ENCODE measurements at regions of chr3 and their contacts with region 1.

Region 1: DNA sequence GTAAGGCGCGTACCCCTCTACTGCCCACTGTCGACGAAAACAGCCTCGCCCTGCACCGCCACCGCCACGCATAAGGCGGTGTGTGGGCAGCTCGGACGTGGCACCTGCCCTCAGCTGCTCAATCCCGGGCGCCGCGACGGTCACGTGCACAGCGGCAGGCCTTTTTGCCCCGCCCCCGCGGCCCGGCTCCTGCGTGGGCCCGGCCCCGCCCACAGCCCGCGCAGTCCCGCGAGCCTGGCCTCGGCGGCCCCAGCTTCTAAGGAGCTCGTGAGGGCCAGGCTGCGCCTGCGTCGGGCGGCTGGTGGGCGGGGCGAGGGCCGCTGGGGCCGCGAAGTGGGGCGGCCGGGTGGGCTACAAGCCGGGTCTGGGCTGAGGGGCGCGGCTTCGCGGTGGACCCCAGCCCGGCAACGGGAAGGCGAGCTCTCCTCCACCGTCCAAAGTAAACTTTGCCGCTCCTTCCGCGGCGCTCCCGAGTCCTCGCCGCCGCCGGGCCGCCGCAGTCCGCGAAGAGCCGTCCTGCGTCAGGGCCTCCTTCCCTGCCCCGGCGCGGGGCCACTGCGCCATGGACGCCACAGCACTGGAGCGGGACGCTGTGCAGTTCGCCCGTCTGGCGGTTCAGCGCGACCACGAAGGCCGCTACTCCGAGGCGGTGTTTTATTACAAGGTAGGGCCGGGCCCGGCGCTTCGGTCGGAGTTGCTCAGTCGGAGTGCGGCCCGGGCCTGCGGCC is at the start of gene CAPN7:
- DNase-seq: peak; percentile 96
- H3K4me3 Mint-ChIP-seq: peak within 1 kb of the TSS; percentile 81
- H3K27ac Mint-ChIP-seq: peak within 1 kb of the TSS; percentile 82
- H3K4me1 Mint-ChIP-seq: peaks cover 29% of the 10 kb centered on the region
- H3K27me3 Mint-ChIP-seq: no peaks in the 10 kb centered on the region
- total RNA-seq, gene CAPN7: 23.6 to 28.1 TPM

Region 2: GRCh38 chr3:14947886-14948555 is 258.1 kb before region 1 on chr3:
- CTCF ChIA-PET with region 1: no interaction called
- POLR2A ChIA-PET with region 1: interaction called, 8 read pairs
- intact Hi-C with region 1: loop called (anchors 5 kb)
- DNase-seq: peak; percentile 97
- H3K4me3 Mint-ChIP-seq: peak overlapping the region; percentile 96
- H3K27ac Mint-ChIP-seq: peak overlapping the region; percentile 99
- H3K4me1 Mint-ChIP-seq: peaks cover 50% of the 10 kb centered on the region
- H3K27me3 Mint-ChIP-seq: no peaks in the 10 kb centered on the region

Region 3: GRCh38 chr3:15074493-15074892 is 131.6 kb before region 1 on chr3:
- CTCF ChIA-PET with region 1: no interaction called
- POLR2A ChIA-PET with region 1: no interaction called
- intact Hi-C with region 1: no loop called
- DNase-seq: no peak
- H3K4me3 Mint-ChIP-seq: no peak overlapping the region
- H3K27ac Mint-ChIP-seq: no peak overlapping the region
- H3K4me1 Mint-ChIP-seq: no peaks in the 10 kb centered on the region
- H3K27me3 Mint-ChIP-seq: no peaks in the 10 kb centered on the region

Region 4: DNA sequence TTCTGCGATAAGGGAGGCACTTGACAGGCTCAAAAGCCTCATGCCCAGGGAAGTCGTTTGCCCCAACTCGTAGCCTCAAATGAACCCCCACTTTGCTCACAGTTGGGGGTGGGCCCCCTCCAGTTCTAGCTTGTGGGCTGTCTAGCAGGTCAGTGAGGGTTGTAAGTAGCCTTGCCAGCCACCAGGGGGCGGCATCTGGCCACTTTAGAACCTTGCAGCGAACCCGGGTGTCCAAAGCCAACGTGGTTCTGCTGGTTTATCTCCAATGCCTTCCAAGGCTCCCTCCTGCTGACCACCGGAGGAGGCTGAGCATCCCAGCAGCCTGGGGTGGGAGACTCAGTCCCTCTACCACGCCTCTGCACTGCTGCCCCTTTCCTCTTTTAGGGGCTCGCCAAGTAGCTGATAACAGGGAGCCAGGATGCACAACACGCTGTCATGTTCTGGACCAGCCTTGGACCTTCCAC is 98.0 kb before region 1 on chr3:
- CTCF ChIA-PET with region 1: interaction called, 45 read pairs
- POLR2A ChIA-PET with region 1: no interaction called
- intact Hi-C with region 1: no loop called
- DNase-seq: peak; percentile 80
- H3K4me3 Mint-ChIP-seq: peak overlapping the region; percentile 5
- H3K27ac Mint-ChIP-seq: no peak overlapping the region
- H3K4me1 Mint-ChIP-seq: no peaks in the 10 kb centered on the region
- H3K27me3 Mint-ChIP-seq: peaks cover 6% of the 10 kb centered on the region

Region 5: DNA sequence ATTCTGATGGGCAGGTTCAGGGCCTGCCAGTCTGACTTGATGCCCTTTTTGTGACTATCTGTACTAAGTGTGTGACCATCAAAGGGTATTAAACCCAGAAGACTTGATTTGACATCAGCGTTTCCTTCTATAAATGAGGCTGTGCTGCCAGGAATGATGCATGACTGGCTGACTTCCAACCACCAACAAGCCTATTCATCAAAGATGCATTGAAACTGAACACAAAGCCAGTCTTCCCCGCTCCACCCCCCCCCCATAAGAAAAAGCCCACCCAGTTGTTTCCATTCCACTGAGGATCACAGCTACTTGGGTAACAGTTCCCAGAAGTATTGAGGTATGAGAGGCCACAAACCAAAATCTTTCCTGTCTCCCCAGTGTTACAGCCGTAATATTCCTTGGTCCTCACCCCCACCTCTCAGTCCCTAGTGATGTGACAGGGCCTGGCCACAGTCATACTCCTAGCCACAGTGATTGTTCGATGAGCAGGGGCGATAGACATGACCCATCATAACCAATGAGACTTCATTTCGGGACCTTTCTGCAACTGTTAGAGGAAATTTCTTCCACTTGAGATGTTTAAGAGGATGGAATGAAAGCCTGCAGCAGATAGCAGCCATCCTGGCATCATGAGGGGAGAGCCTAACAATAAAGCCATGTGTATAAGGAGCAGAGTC is 103.7 kb after region 1 on chr3:
- CTCF ChIA-PET with region 1: interaction called, 3 read pairs
- POLR2A ChIA-PET with region 1: interaction called, 3 read pairs
- intact Hi-C with region 1: loop called (anchors 2 kb)
- DNase-seq: peak; percentile 82
- H3K4me3 Mint-ChIP-seq: peak overlapping the region; percentile 61
- H3K27ac Mint-ChIP-seq: peak overlapping the region; percentile 98
- H3K4me1 Mint-ChIP-seq: peaks cover 78% of the 10 kb centered on the region
- H3K27me3 Mint-ChIP-seq: no peaks in the 10 kb centered on the region

Region 6: GRCh38 chr3:15405448-15406050 is 199.5 kb after region 1 on chr3:
- CTCF ChIA-PET with region 1: interaction called, 123 read pairs
- POLR2A ChIA-PET with region 1: interaction called, 4 read pairs
- intact Hi-C with region 1: loop called (anchors 1 kb)
- DNase-seq: no peak
- H3K4me3 Mint-ChIP-seq: no peak overlapping the region
- H3K27ac Mint-ChIP-seq: no peak overlapping the region
- H3K4me1 Mint-ChIP-seq: peaks cover 3% of the 10 kb centered on the region
- H3K27me3 Mint-ChIP-seq: no peaks in the 10 kb centered on the region

Region 7: DNA sequence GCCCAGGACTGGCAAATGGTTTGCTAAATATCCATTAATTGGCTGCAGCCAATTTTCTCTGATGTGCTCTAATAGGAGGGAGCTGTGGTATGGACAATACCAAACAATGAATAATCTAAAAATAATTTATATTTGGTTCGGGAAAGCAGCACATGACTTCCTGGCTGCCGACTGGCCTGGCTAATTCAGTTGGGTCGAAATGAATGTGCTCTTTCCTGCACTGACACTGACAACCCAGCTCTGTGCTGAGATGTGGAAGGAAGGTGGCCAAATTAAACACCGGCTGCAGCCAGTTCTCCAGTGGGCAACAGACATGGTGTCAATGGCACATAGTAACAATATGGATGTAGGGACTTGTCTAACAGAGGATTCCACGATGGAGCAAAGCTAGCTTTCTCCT is 336.5 kb after region 1 on chr3:
- CTCF ChIA-PET with region 1: no interaction called
- POLR2A ChIA-PET with region 1: no interaction called
- intact Hi-C with region 1: no loop called
- DNase-seq: no peak
- H3K4me3 Mint-ChIP-seq: no peak overlapping the region
- H3K27ac Mint-ChIP-seq: no peak overlapping the region
- H3K4me1 Mint-ChIP-seq: peaks cover 22% of the 10 kb centered on the region
- H3K27me3 Mint-ChIP-seq: no peaks in the 10 kb centered on the region

Region 8: DNA sequence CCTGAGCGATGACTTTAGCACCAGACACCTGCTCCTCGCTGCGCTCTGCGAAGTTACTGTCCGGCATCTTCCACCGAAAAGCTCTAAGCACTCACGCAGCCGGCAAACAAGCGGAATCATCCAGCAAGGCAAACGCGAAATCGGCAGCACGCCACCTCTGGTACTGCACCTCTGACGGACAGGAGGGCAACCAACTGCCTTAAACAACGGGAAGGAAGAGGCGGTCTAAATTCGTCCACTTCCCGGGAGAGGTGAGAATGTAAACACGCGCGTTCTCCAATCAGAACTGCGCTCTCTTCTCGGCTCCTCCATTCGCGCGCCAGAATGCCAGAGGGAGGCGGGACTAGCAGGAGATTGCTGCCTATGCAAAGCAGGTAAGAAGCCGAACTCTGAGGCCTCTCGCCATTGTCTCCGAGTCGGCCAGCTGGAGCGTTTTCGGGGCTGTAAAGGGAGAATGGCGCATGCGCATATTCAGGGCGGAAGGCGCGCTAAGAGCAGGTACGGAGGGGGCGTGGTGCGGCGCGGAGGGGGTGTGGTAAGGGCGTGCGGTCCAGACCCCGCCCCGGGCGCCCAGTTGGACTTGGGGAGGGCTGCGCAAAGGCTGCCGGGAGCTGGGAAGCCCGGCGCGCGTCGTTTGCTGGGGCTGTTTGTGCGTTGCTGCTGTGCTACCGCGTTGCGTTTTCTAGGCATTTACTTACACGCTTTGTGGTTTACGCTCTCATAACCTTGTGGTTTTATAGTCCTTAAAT is 395.5 kb after region 1 on chr3 and contains the starts of genes BTD and HACL1:
- CTCF ChIA-PET with region 1: no interaction called
- POLR2A ChIA-PET with region 1: interaction called, 4 read pairs
- intact Hi-C with region 1: loop called (anchors 2 kb)
- DNase-seq: peak; percentile 98
- H3K4me3 Mint-ChIP-seq: peak within 1 kb of the TSS; percentile 99
- H3K27ac Mint-ChIP-seq: peak within 1 kb of the TSS; percentile 94
- H3K4me1 Mint-ChIP-seq: peaks cover 43% of the 10 kb centered on the region
- H3K27me3 Mint-ChIP-seq: no peaks in the 10 kb centered on the region
- total RNA-seq, gene BTD: 8.6 to 8.7 TPM
- total RNA-seq, gene HACL1: 29.9 to 30.0 TPM

Region 9: DNA sequence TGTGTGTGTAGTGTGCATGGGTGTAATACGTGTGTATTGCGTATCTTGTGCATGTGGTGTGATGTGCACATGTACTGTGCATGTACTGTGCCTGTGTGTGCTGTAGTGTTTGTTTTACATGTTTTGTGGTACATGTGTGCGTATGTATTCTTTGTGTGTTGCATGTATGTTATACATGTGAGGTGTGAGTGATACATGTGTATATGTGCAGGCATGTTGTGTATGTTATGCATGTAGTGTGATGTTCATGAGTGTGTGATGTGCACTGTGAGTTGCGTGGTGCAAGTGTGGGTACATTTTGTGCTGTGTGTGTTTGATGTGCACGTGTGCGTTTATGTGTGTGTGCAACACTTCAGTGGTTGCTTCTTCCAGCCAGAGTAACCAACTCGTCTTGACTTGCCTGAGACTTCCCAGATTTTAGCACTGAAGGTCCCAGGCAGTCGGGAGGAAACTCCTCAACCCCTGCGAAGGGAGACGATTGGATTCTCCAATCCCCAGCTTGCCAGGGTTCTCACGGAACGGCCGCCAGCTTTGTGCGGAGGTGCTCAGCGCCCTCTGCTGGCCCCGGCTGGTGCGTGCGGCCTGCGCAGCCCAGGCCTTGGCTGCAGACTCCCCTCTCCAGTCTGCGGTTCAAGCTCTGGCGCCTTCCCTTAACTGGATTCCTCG is 972.0 kb after region 1 on chr3:
- CTCF ChIA-PET with region 1: interaction called, 4 read pairs
- POLR2A ChIA-PET with region 1: no interaction called
- intact Hi-C with region 1: loop called (anchors 2 kb)
- DNase-seq: peak; percentile 74
- H3K4me3 Mint-ChIP-seq: no peak overlapping the region
- H3K27ac Mint-ChIP-seq: no peak overlapping the region
- H3K4me1 Mint-ChIP-seq: peaks cover 3% of the 10 kb centered on the region
- H3K27me3 Mint-ChIP-seq: peaks cover 13% of the 10 kb centered on the region